PC-3 (cell line): ENCODE measurements at regions of chr3 and their contacts with region 1.

Region 1: DNA sequence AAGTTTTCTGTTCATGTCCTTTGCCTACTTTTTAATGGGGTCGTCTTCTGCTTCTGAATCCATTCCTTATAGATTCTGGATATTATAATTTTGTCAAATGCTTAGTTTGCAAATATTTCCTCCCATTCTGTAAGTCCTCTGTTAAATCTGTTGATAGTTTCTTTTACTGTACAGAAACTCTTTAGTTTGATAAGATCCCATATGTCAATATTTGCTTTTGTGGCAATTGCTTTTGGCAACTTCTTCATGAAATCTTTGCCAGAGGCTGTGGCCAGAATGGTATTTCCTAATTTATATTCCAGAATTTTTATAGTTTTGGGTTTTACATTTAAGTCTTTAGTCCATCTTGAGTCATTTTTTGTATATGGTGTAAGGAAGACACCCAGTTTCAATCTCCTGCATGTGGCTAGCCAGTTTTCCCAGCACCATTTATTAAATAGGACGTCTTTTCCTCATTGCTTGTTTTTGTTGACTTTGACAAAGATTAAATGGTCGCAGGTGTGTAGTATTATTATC is 372.4 kb upstream of the CADM2 start:
- DNase-seq: peak; percentile 62
- ATAC-seq: peak; percentile 80
- H3K4me3 ChIP-seq: no peak overlapping the region
- H3K27ac ChIP-seq: no peak overlapping the region
- H3K4me1 ChIP-seq: peaks cover 15% of the 10 kb centered on the region; the same call in 1 of the 2 replicates
- H3K27me3 ChIP-seq: no peaks in the 10 kb centered on the region
- CTCF ChIP-seq: no peak

Region 2: GRCh38 chr3:84567796-84568195 is 18.6 kb before region 1 on chr3:
- CTCF ChIA-PET with region 1: no interaction called
- POLR2A ChIA-PET with region 1: no interaction called
- intact Hi-C with region 1: loop called (anchors 1 kb)
- DNase-seq: no peak
- ATAC-seq: no peak
- H3K4me3 ChIP-seq: no peak overlapping the region
- H3K27ac ChIP-seq: no peak overlapping the region
- H3K4me1 ChIP-seq: no peaks in the 10 kb centered on the region
- H3K27me3 ChIP-seq: no peaks in the 10 kb centered on the region
- CTCF ChIP-seq: no peak

Region 3: DNA sequence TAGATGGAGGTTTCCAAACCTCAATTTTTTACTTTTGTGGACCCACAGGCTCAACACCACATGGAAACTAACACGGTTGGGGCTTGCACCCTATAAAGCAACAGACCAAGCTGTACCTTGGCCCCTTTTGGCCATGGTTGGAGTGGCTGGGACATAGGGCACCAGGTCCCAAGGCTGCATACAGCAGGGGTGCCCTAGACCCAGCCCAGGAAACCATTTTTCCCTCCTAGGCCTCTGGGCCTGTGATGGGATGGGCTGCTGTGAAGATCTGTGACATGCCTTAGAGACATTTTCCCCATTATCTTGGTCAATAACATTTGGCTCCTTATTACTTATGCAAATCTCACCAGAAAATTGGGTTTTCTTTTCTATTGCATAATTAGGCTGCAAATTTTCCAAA is 35.5 kb after region 1 on chr3:
- CTCF ChIA-PET with region 1: no interaction called
- POLR2A ChIA-PET with region 1: no interaction called
- intact Hi-C with region 1: no loop called
- DNase-seq: no peak
- ATAC-seq: no peak
- H3K4me3 ChIP-seq: no peak overlapping the region
- H3K27ac ChIP-seq: no peak overlapping the region
- H3K4me1 ChIP-seq: no peaks in the 10 kb centered on the region
- H3K27me3 ChIP-seq: no peaks in the 10 kb centered on the region
- CTCF ChIP-seq: no peak